ENCODE measurements at regions of chr6 and their contacts with region 1.

Region 1: DNA sequence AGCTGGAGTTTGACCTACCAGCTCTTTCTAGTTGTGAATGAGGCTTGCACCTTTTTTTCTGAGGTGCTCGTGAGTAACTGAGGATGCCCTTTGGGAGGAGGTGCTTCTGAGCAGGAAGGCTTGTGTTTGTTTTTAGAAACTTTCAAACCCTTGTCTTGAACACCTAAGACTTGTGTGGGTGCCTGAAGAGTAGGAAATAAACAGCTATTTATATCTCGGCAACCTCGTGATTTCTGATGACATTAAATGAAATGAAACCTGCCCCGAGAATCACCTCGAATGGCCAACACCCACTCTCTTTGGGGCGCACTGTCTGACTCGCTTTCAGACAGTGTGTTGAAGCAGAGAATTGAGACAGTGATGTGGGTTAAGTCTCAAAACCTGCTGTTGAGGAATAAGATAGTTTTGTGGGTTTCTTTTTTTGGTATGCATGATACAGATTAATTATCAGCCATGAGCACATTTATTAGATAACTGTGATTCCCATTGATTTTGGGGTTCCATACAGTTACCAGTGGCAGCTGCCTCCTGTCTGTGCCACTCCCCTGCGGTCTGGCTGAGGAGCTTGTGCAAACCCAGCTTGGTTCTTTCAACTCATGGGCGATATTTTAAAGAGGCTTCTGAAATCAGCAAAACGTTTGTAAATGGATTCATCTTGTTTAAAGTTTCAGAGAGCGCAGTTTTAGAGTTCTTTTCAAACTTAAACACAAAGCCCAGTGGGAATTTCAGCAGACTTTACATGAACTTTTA is 8.4 kb downstream of the IRF4 start:
- DNase-seq: peak; percentile 84
- ATAC-seq: peak; percentile 48
- H3K4me3 Mint-ChIP-seq: peak overlapping the region; percentile 64
- H3K27ac Mint-ChIP-seq: peak overlapping the region; percentile 88
- H3K4me1 Mint-ChIP-seq: peaks cover 91% of the 10 kb centered on the region
- H3K27me3 Mint-ChIP-seq: no peaks in the 10 kb centered on the region
- CTCF ChIP-seq: no peak

Region 2: DNA sequence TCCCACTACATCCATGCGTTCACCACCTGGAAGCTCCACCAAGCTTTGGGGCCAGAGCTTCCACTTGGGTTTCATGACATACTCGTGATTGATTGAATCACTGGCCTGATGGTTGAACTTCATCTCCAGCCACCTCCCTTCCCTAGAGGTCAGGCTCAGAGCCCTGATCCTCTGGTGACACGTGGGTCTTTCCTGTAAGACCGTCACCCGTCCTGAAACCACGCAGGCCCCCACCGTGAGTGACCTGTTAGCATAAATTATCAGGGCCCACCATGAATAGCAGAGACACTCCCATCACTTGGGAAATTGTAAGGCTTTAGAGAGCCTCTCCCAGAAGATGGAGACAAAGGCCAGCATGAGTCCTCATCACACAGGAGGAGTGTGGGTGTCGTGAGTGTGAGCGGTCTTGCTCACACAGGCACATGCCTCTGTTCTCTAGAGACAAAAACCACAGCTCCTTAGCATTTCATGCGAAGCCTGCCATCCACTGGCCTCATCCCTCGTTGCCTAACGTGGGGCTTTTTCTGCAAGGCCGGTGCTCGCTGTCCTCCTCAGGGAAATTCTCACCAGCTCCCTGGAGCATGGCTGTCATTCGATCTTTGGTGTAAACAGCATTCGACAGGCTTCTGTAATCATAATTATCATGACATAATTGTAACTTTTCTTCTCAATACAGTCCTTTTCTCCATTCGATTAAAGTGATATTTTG is 172.7 kb before region 1 on chr6:
- CTCF ChIA-PET with region 1: no interaction called
- POLR2A ChIA-PET with region 1: interaction called, 10 read pairs
- intact Hi-C with region 1: no loop called
- DNase-seq: peak; percentile 61
- ATAC-seq: no peak
- H3K4me3 Mint-ChIP-seq: no peak overlapping the region
- H3K27ac Mint-ChIP-seq: peak overlapping the region; percentile 4
- H3K4me1 Mint-ChIP-seq: peaks cover 74% of the 10 kb centered on the region
- H3K27me3 Mint-ChIP-seq: peaks cover 1% of the 10 kb centered on the region
- CTCF ChIP-seq: no peak

Region 3: DNA sequence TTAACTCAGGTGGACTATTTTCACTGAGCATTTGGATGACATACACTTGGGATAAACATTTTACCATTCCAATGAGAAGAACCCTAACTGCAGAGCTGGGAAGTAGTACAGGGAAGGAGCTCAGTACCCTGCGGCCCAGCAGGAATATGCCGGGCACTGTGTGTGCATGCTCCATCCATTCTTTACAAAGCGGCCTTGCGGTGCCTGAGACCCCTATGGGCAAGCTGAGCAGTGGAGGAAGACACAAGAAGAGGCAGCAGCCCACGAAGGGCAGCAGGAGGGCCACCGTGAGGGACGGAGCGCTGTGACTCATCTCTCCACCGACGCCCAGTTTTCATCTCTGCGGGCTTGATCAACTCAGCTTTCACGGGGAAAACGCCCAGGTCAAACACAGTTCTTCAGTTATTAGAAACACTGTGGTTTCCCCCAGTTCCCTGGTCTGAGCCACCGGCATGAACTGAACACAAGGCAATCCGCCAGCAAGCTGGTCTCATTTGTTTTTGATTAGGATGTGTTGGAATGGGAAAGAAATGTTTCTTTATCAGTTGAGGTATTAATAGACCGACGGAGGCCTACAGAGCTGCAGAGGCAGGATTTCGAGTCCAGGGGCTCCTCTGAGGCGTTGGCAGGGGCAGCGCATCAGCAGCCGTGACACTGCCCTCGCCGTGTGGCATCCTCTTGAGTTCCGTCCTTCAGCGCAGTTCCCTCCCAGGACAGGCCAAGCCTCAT is 36.5 kb after region 1 on chr6:
- CTCF ChIA-PET with region 1: interaction called, 7 read pairs
- POLR2A ChIA-PET with region 1: interaction called, 888 read pairs
- intact Hi-C with region 1: loop called (anchors 5 kb)
- DNase-seq: no peak
- ATAC-seq: no peak
- H3K4me3 Mint-ChIP-seq: no peak overlapping the region
- H3K27ac Mint-ChIP-seq: no peak overlapping the region
- H3K4me1 Mint-ChIP-seq: peaks cover 34% of the 10 kb centered on the region
- H3K27me3 Mint-ChIP-seq: no peaks in the 10 kb centered on the region
- CTCF ChIP-seq: no peak

Region 4: GRCh38 chr6:446418-447366 is 46.7 kb after region 1 on chr6:
- CTCF ChIA-PET with region 1: interaction called, 4 read pairs
- POLR2A ChIA-PET with region 1: interaction called, 630 read pairs
- intact Hi-C with region 1: loop called (anchors 5 kb)
- DNase-seq: peak; percentile 97
- ATAC-seq: peak; percentile 78
- H3K4me3 Mint-ChIP-seq: peak overlapping the region; percentile 68
- H3K27ac Mint-ChIP-seq: peak overlapping the region; percentile 97
- H3K4me1 Mint-ChIP-seq: peaks cover 48% of the 10 kb centered on the region
- H3K27me3 Mint-ChIP-seq: no peaks in the 10 kb centered on the region
- CTCF ChIP-seq: no peak

Region 5: GRCh38 chr6:490251-491037 is 90.5 kb after region 1 on chr6:
- CTCF ChIA-PET with region 1: interaction called, 7 read pairs
- POLR2A ChIA-PET with region 1: interaction called, 853 read pairs
- intact Hi-C with region 1: loop called (anchors 5 kb)
- DNase-seq: peak; percentile 59
- ATAC-seq: peak; percentile 34
- H3K4me3 Mint-ChIP-seq: peak overlapping the region; percentile 67
- H3K27ac Mint-ChIP-seq: peak overlapping the region; percentile 99
- H3K4me1 Mint-ChIP-seq: peaks cover 93% of the 10 kb centered on the region
- H3K27me3 Mint-ChIP-seq: no peaks in the 10 kb centered on the region
- CTCF ChIP-seq: no peak

Region 6: GRCh38 chr6:506508-506907 is 106.5 kb after region 1 on chr6:
- CTCF ChIA-PET with region 1: no interaction called
- POLR2A ChIA-PET with region 1: interaction called, 18 read pairs
- intact Hi-C with region 1: loop called (anchors 5 kb)
- DNase-seq: peak; percentile 86
- ATAC-seq: peak; percentile 69
- H3K4me3 Mint-ChIP-seq: peak overlapping the region; percentile 50
- H3K27ac Mint-ChIP-seq: peak overlapping the region; percentile 99
- H3K4me1 Mint-ChIP-seq: peaks cover 97% of the 10 kb centered on the region
- H3K27me3 Mint-ChIP-seq: no peaks in the 10 kb centered on the region
- CTCF ChIP-seq: no peak

Region 7: DNA sequence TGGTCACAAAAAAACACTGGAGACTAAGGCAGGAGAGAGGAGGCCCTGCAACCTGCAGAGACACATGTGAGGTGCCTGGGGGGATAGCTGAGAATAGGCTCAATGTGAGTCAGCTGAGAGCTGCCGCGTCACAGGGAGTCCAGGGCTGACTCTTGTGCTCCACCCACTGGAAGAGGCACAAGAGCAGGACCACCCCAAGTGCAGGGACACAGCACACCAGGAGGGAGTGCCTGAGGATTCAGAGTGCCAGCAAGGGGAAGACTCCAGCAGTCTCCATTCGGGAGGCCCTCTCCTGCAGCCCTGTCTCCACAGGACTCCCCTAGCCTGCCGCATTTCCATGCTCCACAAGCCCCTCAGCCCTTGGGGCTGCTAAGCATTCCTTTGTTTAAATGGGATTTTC is 151.4 kb after region 1 on chr6:
- CTCF ChIA-PET with region 1: interaction called, 3 read pairs
- POLR2A ChIA-PET with region 1: interaction called, 16 read pairs
- intact Hi-C with region 1: no loop called
- DNase-seq: peak; percentile 77
- ATAC-seq: peak; percentile 87
- H3K4me3 Mint-ChIP-seq: no peak overlapping the region
- H3K27ac Mint-ChIP-seq: peak overlapping the region; percentile 80
- H3K4me1 Mint-ChIP-seq: peaks cover 57% of the 10 kb centered on the region
- H3K27me3 Mint-ChIP-seq: no peaks in the 10 kb centered on the region
- CTCF ChIP-seq: no peak